ENCODE measurements at regions of chr2 and their contacts with region 1.

Region 1: DNA sequence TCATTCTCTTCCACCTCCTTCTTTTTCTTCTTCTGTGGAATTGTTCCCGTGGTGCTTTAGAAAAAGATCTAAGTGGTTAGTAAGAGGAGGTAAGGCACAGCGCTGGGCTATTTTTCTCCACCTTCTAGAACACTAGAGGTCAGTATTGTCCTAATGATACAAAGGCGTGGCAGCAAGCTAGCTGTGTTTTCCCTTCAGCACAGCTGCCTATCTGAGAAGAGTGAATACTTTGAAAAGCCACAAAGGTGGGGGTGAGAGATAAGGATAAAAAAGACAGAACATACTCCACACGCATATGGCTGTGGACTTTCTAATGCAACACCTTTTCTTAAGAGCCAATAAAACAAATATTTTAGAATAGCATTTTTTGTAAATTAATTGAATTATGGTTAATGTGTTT is 2.1 kb downstream of the CNTNAP5 start:
- DNase-seq: no peak
- H3K4me3 ChIP-seq: no peak overlapping the region
- H3K27ac ChIP-seq: no peak overlapping the region
- H3K4me1 ChIP-seq: peaks cover 0 to 5% (median 0%) of the 10 kb centered on the region in 4 donors
- H3K27me3 ChIP-seq: peaks cover 43% of the 10 kb centered on the region
- CTCF ChIP-seq: peak; percentile 13 to 50 (median 40)
- EP300 ChIP-seq: no peak
- POLR2A ChIP-seq: no peak

Region 2: GRCh38 chr2:123993728-123994323 is 33.4 kb before region 1 on chr2:
- in situ Hi-C with region 1: no loop called
- intact Hi-C with region 1: no loop called
- DNase-seq: peak; percentile 17
- H3K4me3 ChIP-seq: no peak overlapping the region
- H3K27ac ChIP-seq: no peak overlapping the region
- H3K4me1 ChIP-seq: no peaks in the 10 kb centered on the region
- H3K27me3 ChIP-seq: no peaks in the 10 kb centered on the region
- CTCF ChIP-seq: peak; percentile 30 to 49 (median 44)
- EP300 ChIP-seq: no peak
- POLR2A ChIP-seq: no peak

Region 3: DNA sequence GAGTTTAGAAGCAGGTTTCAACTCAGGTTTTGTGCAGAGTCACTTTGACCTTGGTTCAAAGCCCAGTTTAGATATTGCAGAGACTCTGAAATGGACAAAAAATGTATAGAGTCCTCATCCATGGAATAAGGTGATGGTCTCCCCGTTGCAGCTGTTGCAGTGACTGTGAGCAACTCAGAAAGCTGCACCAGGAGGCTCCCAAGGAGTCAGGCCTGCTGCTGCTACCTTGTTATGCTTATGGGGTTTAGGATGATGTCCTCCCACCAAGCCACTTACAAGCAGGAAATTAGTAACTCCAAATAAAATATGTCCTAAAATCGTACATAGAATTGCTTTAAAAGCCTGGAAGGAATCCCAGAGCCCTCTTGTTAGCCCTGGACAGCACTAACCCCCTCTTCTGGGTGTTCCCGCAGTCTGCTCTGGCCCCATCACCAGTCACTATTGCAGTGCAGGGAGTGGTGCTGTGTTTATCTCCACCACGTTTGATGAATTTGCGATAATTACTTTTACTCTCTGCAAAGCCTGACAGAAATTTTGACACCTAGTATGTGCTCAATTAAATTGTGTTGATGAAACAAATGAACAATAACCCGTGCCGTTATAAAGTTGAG is 186.9 kb after region 1 on chr2:
- in situ Hi-C with region 1: no loop called
- intact Hi-C with region 1: no loop called
- DNase-seq: no peak
- H3K4me3 ChIP-seq: no peak overlapping the region
- H3K27ac ChIP-seq: no peak overlapping the region
- H3K4me1 ChIP-seq: no peaks in the 10 kb centered on the region
- H3K27me3 ChIP-seq: no peaks in the 10 kb centered on the region
- CTCF ChIP-seq: no peak
- EP300 ChIP-seq: no peak
- POLR2A ChIP-seq: no peak

Region 4: DNA sequence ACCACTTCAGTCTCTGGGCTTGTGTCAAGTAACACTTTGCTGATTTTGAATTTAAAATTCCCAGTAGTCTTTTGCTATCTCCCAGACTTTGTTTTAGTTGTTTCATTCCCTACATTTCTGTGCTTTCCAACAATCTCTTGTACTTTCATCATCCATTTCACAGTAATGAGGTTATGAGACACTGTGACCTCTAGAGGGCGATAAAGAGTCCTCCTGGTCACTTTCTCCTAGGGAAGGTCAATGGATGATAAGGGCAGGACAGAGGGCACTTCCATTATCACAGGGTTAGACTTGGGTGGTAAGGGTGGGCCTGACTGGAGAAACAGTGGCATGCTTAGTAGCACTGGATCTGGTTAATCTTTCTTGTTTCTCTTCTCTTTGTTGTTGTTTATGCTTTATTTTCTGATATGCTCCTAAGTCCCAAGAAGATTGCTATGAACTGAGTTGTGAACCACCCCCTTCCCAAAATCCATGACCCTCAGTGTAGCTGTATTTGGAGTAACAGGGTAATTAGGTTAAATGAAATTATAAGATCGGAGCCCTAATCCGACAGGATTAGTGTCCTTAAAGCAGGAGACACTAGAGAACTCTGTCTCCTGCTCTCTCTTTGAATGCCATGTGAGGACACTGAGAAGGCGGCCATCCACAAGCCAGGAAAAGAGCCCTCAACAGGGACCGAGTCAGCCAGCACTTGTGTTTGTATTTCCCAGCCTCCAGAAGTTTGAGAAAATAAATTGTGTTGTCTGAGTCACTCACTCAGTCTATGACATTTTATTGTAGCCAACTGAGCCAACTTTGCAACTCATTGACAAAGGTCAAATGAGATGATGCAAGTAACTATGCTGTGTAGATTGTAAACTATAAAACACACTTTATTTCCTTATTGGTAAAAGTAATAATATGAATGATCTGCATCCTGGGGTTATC is 777.1 kb after region 1 on chr2:
- in situ Hi-C with region 1: loop called in 1 of 4 experiments (anchors 25 kb)
- intact Hi-C with region 1: no loop called
- DNase-seq: peak; percentile 43
- H3K4me3 ChIP-seq: no peak overlapping the region
- H3K27ac ChIP-seq: peak overlapping the region; percentile 67 to 78 (median 74)
- H3K4me1 ChIP-seq: peaks cover 0 to 11% (median 7%) of the 10 kb centered on the region in 4 donors
- H3K27me3 ChIP-seq: no peaks in the 10 kb centered on the region
- CTCF ChIP-seq: peak; percentile 24 to 49 (median 44)
- EP300 ChIP-seq: no peak
- POLR2A ChIP-seq: no peak

Measured in transverse colon (tissue), 4 donors.